GM12878 (cell line): ENCODE measurements at regions of chr1 and their contacts with region 1.

Region 1: GRCh38 chr1:80929868-80930502 is 870.7 kb upstream of the ADGRL2 start:
- DNase-seq: no peak
- ATAC-seq: peak; percentile 32; the same call in 1 of the 3 replicates
- H3K4me3 ChIP-seq: no peak overlapping the region
- H3K27ac ChIP-seq: no peak overlapping the region
- H3K4me1 ChIP-seq: no peaks in the 10 kb centered on the region
- H3K27me3 ChIP-seq: no peaks in the 10 kb centered on the region
- CTCF ChIP-seq: no peak; a peak in 1 of 6 replicates
- EP300 ChIP-seq: no peak
- POLR2A ChIP-seq: no peak
- RAD21 ChIP-seq: no peak

Region 2: DNA sequence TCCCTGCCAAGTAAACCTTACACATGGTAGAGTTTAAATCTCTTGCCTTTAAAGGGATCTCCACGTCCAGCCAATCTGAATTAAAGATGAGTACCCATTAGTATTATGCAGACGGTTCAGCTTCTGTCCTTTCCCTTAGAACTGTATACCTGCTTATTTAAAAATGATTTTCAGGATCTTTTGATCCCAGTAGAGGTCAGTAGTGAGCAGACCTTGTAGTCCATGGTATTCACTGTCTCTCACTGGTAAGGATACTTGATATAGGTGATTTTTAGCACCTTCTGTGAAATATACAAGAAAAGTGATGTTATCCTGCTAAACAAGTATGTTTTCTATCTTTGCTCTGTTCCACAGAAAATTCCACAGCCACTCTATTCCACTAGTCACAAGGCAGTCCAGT is 711.9 kb before region 1 on chr1:
- CTCF ChIA-PET with region 1: interaction called, 3 read pairs
- POLR2A ChIA-PET with region 1: no interaction called
- RAD21 ChIA-PET with region 1: no interaction called
- SMC1A ChIA-PET with region 1: no interaction called
- in situ Hi-C with region 1: no loop called
- intact Hi-C with region 1: loop called (anchors 10 kb)
- DNase-seq: no peak
- ATAC-seq: peak; percentile 93
- H3K4me3 ChIP-seq: no peak overlapping the region
- H3K27ac ChIP-seq: no peak overlapping the region
- H3K4me1 ChIP-seq: no peaks in the 10 kb centered on the region
- H3K27me3 ChIP-seq: no peaks in the 10 kb centered on the region
- CTCF ChIP-seq: peak; percentile 39 to 56 (median 49)
- EP300 ChIP-seq: no peak
- POLR2A ChIP-seq: no peak
- RAD21 ChIP-seq: peak; percentile 43

Region 3: DNA sequence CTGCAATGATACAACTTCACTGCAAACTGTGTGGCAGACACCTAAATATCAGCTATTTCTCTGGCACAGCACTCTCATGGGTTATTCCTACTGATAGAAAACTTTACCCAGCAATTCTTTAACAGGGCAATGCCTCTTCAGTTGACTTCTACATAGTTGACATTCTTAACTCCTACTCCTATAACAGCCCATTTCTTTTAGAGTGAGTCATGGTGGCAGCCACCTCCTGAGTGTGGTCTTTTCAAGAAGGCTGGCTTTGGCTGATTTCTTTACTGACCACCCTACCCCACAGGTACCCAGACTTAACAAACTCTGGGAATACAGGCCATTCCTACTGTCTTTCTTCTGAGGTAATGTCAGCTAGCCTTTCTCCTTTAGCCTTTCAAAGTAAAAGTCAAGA is 64.9 kb after region 1 on chr1:
- CTCF ChIA-PET with region 1: no interaction called
- POLR2A ChIA-PET with region 1: no interaction called
- RAD21 ChIA-PET with region 1: no interaction called
- SMC1A ChIA-PET with region 1: no interaction called
- in situ Hi-C with region 1: no loop called
- intact Hi-C with region 1: no loop called
- DNase-seq: no peak
- ATAC-seq: no peak
- H3K4me3 ChIP-seq: no peak overlapping the region
- H3K27ac ChIP-seq: no peak overlapping the region
- H3K4me1 ChIP-seq: no peaks in the 10 kb centered on the region
- H3K27me3 ChIP-seq: no peaks in the 10 kb centered on the region
- CTCF ChIP-seq: no peak
- EP300 ChIP-seq: no peak
- POLR2A ChIP-seq: no peak
- RAD21 ChIP-seq: no peak